Natural killer cell (primary cell): ENCODE measurements at regions of chr11 and their contacts with region 1.

Region 1: GRCh38 chr11:36289226-36289852 is at the start of gene COMMD9:
- DNase-seq: peak; percentile 86 to 95
- ATAC-seq: peak; percentile 96 to 99 (median 98)
- H3K4me3 ChIP-seq: peak within 1 kb of the TSS; percentile 88
- H3K4me3 Mint-ChIP-seq: peak within 1 kb of the TSS; percentile 97
- H3K27ac ChIP-seq: no peak within 1 kb of the TSS
- H3K27ac Mint-ChIP-seq: peak within 1 kb of the TSS; percentile 86 to 94
- H3K4me1 ChIP-seq: peaks cover 15% of the 10 kb centered on the region
- H3K4me1 Mint-ChIP-seq: peaks cover 34 to 37% of the 10 kb centered on the region in 2 donors
- H3K27me3 ChIP-seq: no peaks in the 10 kb centered on the region
- H3K27me3 Mint-ChIP-seq: no peaks in the 10 kb centered on the region
- CTCF ChIP-seq: no peak
- total RNA-seq, gene COMMD9: 64.6 to 79.1 (median 74.0) TPM

Region 2: DNA sequence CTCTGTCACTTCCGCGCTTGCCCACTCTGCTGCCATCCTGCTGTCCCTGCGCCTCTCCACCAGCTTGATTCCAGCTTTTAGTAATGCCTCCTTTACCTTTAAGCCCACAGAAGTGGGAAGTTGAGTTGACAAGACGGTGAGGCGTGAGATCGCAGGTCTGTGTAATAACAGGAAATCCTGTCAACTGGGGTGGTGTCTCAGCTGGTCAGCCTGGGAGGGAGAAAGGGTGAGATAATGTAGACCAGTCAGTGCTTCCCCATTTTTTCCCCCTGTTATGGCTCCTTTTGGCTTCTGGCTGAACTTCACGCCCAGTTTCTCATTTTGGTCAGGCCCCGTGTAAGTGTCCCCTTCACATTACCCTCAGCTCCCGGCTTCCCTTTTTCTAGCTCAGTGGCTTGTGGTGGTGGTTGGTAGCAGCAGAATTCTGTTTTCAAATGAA is 121.9 kb after region 1 on chr11:
- intact Hi-C with region 1: no loop called
- DNase-seq: peak; percentile 40 to 61
- ATAC-seq: peak; percentile 71 to 91 (median 78)
- H3K4me3 ChIP-seq: no peak overlapping the region
- H3K4me3 Mint-ChIP-seq: peak overlapping the region; percentile 94
- H3K27ac ChIP-seq: peak overlapping the region; percentile 80
- H3K27ac Mint-ChIP-seq: peak overlapping the region; percentile 97 to 99
- H3K4me1 ChIP-seq: peaks cover 69% of the 10 kb centered on the region
- H3K4me1 Mint-ChIP-seq: peaks cover 79 to 83% of the 10 kb centered on the region in 2 donors
- H3K27me3 ChIP-seq: no peaks in the 10 kb centered on the region
- H3K27me3 Mint-ChIP-seq: no peaks in the 10 kb centered on the region
- CTCF ChIP-seq: no peak

Region 3: DNA sequence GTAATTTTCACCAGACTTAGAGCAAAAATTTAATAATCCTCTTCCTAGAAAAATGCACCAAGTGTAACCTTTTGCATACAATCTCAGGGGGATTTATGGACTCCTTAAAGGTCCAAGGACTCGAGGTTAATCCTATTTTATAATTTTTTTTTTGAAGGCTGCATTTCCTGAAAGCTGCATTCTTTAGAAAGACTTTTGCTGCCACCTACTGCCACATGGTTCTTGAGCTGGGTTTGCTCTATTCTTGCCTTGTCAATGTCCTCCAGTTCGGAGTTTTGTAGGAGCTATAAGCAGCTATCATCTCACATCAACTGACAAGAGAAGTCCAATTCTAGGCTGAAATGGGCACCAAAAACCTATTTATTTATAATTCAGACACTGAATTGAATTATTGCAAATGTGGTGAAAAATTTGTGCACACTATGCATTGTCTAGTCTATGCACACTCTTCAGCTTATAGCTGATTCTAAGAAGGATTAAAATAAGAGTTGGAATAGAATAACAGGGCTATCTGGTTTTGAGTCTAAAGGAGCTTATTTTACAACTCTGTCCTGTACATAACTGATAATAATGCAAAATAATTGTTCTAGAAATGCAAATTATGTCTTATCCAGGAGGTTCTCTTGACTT is 189.5 kb after region 1 on chr11:
- intact Hi-C with region 1: loop called (anchors 1 kb)
- DNase-seq: peak in 1 of 2 donors; percentile 68
- ATAC-seq: peak; percentile 57 to 65 (median 59)
- H3K4me3 ChIP-seq: no peak overlapping the region
- H3K4me3 Mint-ChIP-seq: no peak overlapping the region
- H3K27ac ChIP-seq: no peak overlapping the region
- H3K27ac Mint-ChIP-seq: peak overlapping the region in 1 of 2 donors; percentile 63
- H3K4me1 ChIP-seq: peaks cover 6% of the 10 kb centered on the region
- H3K4me1 Mint-ChIP-seq: peaks cover 8 to 14% of the 10 kb centered on the region in 2 donors
- H3K27me3 ChIP-seq: no peaks in the 10 kb centered on the region
- H3K27me3 Mint-ChIP-seq: no peaks in the 10 kb centered on the region
- CTCF ChIP-seq: peak; percentile 58

Region 4: GRCh38 chr11:36509694-36510566 is 220.6 kb after region 1 on chr11 and contains the start of gene TRAF6:
- intact Hi-C with region 1: loop called (anchors 1 kb)
- DNase-seq: peak; percentile 91 to 94
- ATAC-seq: peak; percentile 93 to 97 (median 96)
- H3K4me3 ChIP-seq: peak within 1 kb of the TSS; percentile 75
- H3K4me3 Mint-ChIP-seq: peak within 1 kb of the TSS; percentile 99
- H3K27ac ChIP-seq: peak within 1 kb of the TSS; percentile 70
- H3K27ac Mint-ChIP-seq: peak within 1 kb of the TSS; percentile 91 to 94
- H3K4me1 ChIP-seq: peaks cover 14% of the 10 kb centered on the region
- H3K4me1 Mint-ChIP-seq: peaks cover 39 to 41% of the 10 kb centered on the region in 2 donors
- H3K27me3 ChIP-seq: no peaks in the 10 kb centered on the region
- H3K27me3 Mint-ChIP-seq: peaks cover 3 to 11% of the 10 kb centered on the region in 2 donors
- CTCF ChIP-seq: peak; percentile 99
- total RNA-seq, gene TRAF6: 37.9 to 43.3 (median 40.2) TPM

Region 5: DNA sequence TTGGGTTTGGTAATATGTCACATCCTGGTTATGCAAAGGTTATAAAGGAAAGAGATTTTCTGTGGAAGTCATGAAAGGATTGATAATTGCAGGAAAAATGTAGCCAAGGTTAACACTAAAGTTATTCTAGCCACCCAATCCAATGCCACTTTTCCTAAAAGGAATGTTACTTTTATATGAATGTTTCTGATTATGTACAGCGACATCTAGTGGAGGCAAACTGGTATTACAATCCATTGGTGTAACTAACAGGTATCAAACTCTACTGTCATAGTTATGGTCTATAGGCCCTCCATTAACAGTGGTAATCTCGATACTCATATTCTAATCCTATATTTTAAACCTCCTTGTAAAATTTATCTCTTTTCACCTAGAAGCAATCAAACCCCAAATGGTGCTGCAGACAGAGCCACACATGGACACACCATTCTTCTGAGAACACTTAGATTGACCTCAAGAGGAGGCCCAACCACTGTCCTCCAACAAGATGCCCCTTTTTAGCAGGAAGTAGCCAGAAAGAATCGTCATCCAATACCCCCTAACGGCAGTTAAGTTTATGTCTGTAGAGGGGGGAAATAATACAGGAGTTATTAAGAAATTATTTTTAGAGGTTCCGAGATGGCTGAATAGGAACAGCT is 383.6 kb after region 1 on chr11:
- intact Hi-C with region 1: loop called (anchors 2 kb)
- DNase-seq: peak in 1 of 2 donors; percentile 67
- ATAC-seq: no peak
- H3K4me3 ChIP-seq: no peak overlapping the region
- H3K4me3 Mint-ChIP-seq: no peak overlapping the region
- H3K27ac ChIP-seq: no peak overlapping the region
- H3K27ac Mint-ChIP-seq: no peak overlapping the region
- H3K4me1 ChIP-seq: no peaks in the 10 kb centered on the region
- H3K4me1 Mint-ChIP-seq: no peaks in the 10 kb centered on the region
- H3K27me3 ChIP-seq: no peaks in the 10 kb centered on the region
- H3K27me3 Mint-ChIP-seq: no peaks in the 10 kb centered on the region
- CTCF ChIP-seq: peak; percentile 98